Panc1 (cell line): ENCODE measurements at regions of chr3 and their contacts with region 1.

Region 1: DNA sequence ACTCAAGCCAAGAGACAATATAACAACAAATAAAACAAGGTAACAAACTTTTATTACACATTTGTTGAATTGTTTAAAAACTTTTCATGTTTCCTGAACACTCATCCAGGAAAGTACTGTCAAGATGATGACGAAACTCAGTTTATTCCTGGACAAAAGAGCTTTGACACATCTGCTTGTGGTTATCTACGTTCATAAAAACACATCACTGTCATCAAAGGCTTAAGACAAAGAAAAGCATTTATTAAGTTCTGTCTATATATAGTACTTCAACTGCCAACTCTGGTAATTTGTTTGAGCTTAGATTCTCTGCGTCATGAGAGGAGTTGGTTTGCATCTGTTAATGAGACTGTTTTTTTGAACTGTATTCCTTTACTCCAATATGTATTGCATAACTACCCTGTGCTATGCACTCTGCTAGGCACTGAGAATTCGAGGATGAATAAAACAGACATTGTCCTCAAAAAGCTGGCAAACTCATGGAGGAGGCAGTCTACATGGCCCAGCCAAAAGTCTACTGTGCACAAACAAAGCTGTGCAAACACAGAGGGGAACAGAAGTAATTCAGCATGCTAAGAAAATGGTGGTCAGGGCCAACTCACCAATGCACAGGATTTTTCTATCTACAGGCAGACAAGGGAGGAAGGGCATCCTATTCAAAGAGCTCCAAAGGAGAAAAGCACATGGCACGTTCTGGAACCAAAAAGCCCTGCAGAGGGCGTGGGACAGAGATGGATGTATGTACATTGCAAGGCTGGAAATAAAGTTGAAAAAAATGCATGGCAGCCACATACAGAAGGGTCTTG is 21.5 kb downstream of the PLD1 start:
- DNase-seq: no peak
- ATAC-seq: no peak
- H3K4me3 ChIP-seq: no peak overlapping the region
- H3K27ac ChIP-seq: peak overlapping the region; percentile 48
- H3K4me1 ChIP-seq: peaks cover 78% of the 10 kb centered on the region
- H3K27me3 ChIP-seq: no peaks in the 10 kb centered on the region
- CTCF ChIP-seq: peak; percentile 48

Region 2: GRCh38 chr3:171729452-171730334 is 59.1 kb before region 1 on chr3:
- CTCF ChIA-PET with region 1: no interaction called
- POLR2A ChIA-PET with region 1: interaction called, 13 read pairs
- in situ Hi-C with region 1: no loop called
- intact Hi-C with region 1: no loop called
- DNase-seq: no peak
- ATAC-seq: no peak
- H3K4me3 ChIP-seq: no peak overlapping the region
- H3K27ac ChIP-seq: no peak overlapping the region
- H3K4me1 ChIP-seq: no peaks in the 10 kb centered on the region
- H3K27me3 ChIP-seq: no peaks in the 10 kb centered on the region
- CTCF ChIP-seq: no peak